Breast epithelium (tissue), 4 donors: ENCODE measurements at regions of chr11 and their contacts with region 1.

Region 1: GRCh38 chr11:92046103-92046502 is 178.5 kb upstream of the FAT3 start:
- DNase-seq: no peak
- H3K4me3 ChIP-seq: no peak overlapping the region
- H3K27ac ChIP-seq: no peak overlapping the region
- H3K4me1 ChIP-seq: no peaks in the 10 kb centered on the region
- H3K27me3 ChIP-seq: no peaks in the 10 kb centered on the region
- CTCF ChIP-seq: no peak
- POLR2A ChIP-seq: no peak

Region 2: DNA sequence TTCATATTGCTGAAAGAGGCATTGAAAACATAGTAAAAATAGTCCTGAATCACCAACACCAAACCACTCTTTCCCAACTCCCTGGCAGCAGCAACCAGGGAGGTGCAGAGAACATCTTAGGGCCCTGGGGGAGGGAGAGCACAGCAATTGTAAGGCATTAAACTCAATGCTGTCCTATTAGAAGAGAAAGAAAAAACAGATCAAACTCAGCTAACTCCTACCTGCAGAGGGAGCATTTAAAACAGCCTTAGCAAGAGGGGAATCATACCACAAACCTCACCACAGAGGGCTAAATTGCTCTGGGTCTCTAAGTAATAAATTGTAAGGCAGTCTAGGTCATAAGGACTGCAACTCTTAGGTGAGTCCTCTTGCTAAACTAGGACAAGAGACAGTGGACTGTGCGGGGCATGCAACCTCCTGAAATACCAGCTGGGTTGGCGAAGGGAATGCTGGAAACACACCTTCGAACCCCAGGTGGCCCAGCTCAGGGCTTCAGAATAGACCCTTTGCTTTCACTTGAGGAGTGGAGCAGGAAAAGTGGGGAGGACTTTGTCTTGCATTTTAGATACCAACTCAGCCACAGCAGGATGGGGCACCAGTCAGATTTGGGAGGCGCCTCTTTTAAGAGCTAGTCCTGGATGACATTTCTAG is 518.6 kb before region 1 on chr11:
- intact Hi-C with region 1: no loop called
- DNase-seq: no peak
- H3K4me3 ChIP-seq: no peak overlapping the region
- H3K27ac ChIP-seq: no peak overlapping the region
- H3K4me1 ChIP-seq: no peaks in the 10 kb centered on the region
- H3K27me3 ChIP-seq: no peaks in the 10 kb centered on the region
- CTCF ChIP-seq: no peak
- POLR2A ChIP-seq: no peak

Region 3: DNA sequence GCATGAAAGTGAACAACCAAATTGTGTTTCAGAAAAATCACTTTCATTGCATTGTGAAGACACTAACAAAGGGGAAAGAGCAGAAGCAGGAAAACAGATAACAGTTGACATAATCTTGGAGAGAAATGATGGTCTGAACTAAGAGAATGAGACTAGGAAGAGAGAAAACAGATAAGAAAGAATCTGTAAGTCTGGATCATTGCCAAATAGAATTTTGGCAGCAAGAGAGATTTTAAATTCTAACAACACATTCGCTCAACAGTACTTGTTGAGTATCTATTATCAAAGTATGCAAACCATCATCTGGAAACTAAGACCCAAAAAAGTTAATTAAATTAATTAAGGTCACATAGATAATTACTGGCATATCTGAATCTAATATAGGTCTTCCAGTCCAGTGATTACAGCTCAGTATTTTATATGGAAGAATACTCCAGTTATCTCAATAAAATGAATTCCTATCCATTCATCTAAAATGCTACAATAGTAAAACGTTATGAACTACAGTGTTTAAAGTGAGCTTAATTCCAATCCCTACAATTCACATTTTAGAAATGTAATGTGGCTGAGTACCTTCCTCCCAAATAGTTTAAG is 11.8 kb after region 1 on chr11:
- intact Hi-C with region 1: loop called (anchors 1 kb)
- DNase-seq: no peak
- H3K4me3 ChIP-seq: no peak overlapping the region
- H3K27ac ChIP-seq: no peak overlapping the region
- H3K4me1 ChIP-seq: no peaks in the 10 kb centered on the region
- H3K27me3 ChIP-seq: no peaks in the 10 kb centered on the region
- CTCF ChIP-seq: no peak
- POLR2A ChIP-seq: no peak

Region 4: GRCh38 chr11:93267383-93267782 is 1221.3 kb after region 1 on chr11:
- intact Hi-C with region 1: no loop called
- DNase-seq: no peak
- H3K4me3 ChIP-seq: no peak overlapping the region
- H3K27ac ChIP-seq: no peak overlapping the region
- H3K4me1 ChIP-seq: no peaks in the 10 kb centered on the region
- H3K27me3 ChIP-seq: no peaks in the 10 kb centered on the region
- CTCF ChIP-seq: no peak
- POLR2A ChIP-seq: no peak